ENCODE measurements at regions of chr10 and their contacts with region 1.

Region 1: GRCh38 chr10:60816628-60817397 is 38.5 kb downstream of the CDK1 start:
- DNase-seq: peak; percentile 53
- CTCF ChIP-seq: peak; percentile 56

Region 2: DNA sequence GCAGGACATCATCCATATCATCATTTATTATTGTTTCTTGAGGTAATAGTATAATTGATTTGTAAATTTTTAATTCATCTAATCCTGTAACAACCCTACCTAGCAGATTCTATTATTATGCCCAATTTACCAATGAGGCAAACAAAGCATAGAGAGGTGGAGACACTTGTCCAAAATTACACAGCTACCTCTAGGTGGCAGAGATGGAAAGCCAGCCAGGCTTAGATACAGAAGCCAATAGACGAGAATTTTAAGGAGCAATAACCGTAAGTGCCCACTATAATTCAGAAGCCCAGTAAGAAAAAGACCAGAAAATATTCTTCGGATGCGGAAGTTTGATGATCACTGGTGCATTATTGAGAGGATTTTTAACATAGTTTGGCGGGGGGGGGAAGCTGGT is 481.1 kb before region 1 on chr10:
- in situ Hi-C with region 1: no loop called
- DNase-seq: no peak
- CTCF ChIP-seq: peak; percentile 10

Region 3: DNA sequence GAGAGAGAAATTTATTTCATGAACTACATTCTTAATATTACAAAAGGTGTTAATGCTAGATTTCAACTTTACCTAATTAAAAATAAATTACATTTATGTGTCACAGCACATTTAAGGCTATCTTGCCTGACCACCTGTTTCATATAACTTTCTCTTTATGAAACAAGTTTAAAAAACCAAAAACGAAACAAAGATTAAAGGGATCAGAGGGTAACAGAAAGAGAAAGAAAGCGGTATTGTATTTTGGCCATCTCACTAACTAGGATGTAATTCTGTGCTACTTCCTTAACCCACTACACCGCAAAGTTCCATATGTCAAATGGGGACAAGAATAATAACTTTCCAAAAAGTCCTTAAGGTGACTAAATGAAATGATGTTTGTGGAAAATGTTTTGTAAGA is 133.5 kb after region 1 on chr10:
- in situ Hi-C with region 1: no loop called
- DNase-seq: no peak
- CTCF ChIP-seq: no peak

Region 4: DNA sequence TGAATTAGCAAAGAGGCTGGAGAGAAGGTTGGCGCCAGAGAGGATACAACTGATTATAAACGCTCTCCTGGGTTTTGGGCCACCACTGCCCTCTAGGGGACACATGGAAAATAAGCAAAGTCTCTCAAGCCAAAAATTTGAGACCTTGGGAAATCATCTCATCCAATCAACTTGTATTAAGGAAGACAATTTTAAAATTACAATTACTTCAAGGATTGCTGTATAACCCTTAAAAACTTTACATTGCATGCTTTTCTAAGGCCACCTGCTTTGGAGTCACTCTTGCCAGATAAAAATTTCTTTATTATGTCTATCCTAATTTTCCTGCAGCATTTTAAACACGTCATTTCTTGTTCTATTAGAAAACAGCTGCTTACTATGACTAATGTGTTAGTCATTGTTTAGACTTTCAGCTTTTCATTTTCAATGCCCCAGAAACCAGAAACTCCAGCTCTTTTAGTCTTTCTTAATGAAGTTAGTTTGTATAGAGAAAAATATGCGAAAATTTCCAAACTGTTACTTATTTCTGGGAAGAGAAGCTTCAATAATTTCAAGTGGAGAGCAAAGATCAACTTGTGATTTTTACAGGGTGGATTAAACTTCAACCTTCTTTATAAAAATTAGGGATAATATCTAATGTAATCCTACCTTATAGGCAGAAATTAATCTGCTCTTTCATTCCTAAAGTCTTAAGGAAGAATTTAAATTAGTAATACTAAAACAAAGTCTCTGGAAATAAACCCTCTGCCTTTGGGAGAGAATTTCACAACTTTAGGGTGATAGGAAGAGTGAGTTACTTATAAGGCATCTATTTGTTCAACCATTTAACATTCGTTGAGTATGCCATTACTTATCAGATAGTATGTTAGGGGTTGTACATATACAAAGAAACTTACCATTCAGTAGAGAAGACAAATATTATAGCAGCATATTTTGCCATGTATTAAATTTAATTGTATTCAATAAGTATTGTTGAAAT is 147.7 kb after region 1 on chr10:
- in situ Hi-C with region 1: loop called (anchors 10 kb)
- DNase-seq: peak; percentile 28
- CTCF ChIP-seq: peak; percentile 68

Region 5: GRCh38 chr10:61284222-61284890 is 467.5 kb after region 1 on chr10:
- in situ Hi-C with region 1: loop called (anchors 25 kb)
- DNase-seq: peak; percentile 4
- CTCF ChIP-seq: peak; percentile 42

Region 6: DNA sequence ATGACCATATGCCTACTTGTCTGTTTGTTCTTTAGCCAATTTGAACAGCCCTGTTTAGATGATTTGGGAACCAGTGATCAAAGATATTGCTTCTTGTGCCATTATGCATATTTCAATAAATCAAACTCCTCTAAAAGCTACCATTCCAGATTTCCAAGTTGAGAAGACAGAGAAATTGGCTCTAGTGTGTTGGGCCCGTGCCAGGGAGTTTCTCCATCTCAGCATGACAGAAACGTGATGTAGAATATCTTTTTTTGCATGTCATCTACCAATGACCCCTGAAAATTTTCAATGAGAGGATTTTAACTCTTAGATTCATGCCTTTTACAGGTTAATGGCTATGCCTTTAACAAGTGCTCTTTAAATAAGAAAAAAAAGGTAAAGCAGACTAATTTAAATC is 795.2 kb after region 1 on chr10:
- in situ Hi-C with region 1: no loop called
- DNase-seq: no peak
- CTCF ChIP-seq: no peak